H1 (cell line): ENCODE measurements at regions of chr6 and their contacts with region 1.

Region 1: DNA sequence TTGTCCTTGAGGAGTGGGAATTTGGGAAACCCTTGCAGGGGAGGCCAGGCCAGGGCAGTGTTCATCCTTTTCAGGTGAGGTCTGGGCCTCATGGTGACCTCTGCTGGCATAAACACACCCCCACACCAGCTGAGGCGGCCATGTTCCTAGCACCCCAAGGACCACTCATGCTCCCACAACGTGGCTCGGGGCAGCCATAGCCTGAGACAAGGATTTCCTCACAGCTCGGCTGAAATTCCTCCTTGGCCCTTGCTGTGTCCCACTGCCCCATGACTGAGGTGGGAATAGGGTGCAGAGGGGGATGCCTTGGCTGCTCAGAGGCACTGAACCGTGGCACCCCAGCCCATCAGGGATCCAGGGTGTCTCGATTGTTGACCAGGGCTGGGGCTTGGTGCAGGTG is 27.3 kb upstream of the SPDEF start:
- DNase-seq: no peak
- H3K4me3 ChIP-seq: no peak overlapping the region
- H3K27ac ChIP-seq: no peak overlapping the region
- H3K4me1 ChIP-seq: peaks cover 2 to 20% (median 11%) of the 10 kb centered on the region in 4 experiments; a peak in 6 of 7 replicates
- H3K27me3 ChIP-seq: no peaks in the 10 kb centered on the region
- CTCF ChIP-seq: peak; percentile 36 to 68 (median 61); a peak in 3 of 4 replicates
- EP300 ChIP-seq: no peak
- POLR2A ChIP-seq: no peak
- RAD21 ChIP-seq: peak; percentile 45 to 59

Region 2: GRCh38 chr6:34560366-34561226 is 22.9 kb before region 1 on chr6:
- CTCF ChIA-PET with region 1: interaction called, 20 read pairs
- POLR2A ChIA-PET with region 1: no interaction called
- DNase-seq: no peak
- H3K4me3 ChIP-seq: no peak overlapping the region
- H3K27ac ChIP-seq: no peak overlapping the region
- H3K4me1 ChIP-seq: peaks cover 0 to 6% (median 4%) of the 10 kb centered on the region in 4 experiments; a peak in 4 of 7 replicates
- H3K27me3 ChIP-seq: no peaks in the 10 kb centered on the region
- CTCF ChIP-seq: no peak
- EP300 ChIP-seq: no peak
- POLR2A ChIP-seq: no peak
- RAD21 ChIP-seq: peak in 1 of 2 experiments; percentile 21; a peak in 2 of 4 replicates

Region 3: GRCh38 chr6:34565722-34566137 is 17.7 kb before region 1 on chr6:
- CTCF ChIA-PET with region 1: interaction called, 20 read pairs
- POLR2A ChIA-PET with region 1: interaction called, 4 read pairs
- DNase-seq: no peak
- H3K4me3 ChIP-seq: no peak overlapping the region
- H3K27ac ChIP-seq: no peak overlapping the region
- H3K4me1 ChIP-seq: peaks cover 0 to 15% (median 9%) of the 10 kb centered on the region in 4 experiments; a peak in 6 of 7 replicates
- H3K27me3 ChIP-seq: no peaks in the 10 kb centered on the region
- CTCF ChIP-seq: peak in 1 of 3 experiments; percentile 14; a peak in 1 of 4 replicates
- EP300 ChIP-seq: no peak
- POLR2A ChIP-seq: no peak
- RAD21 ChIP-seq: peak; percentile 13 to 19; a peak in 1 of 4 replicates

Region 4: GRCh38 chr6:34595332-34596184 is 12.1 kb after region 1 on chr6:
- CTCF ChIA-PET with region 1: interaction called, 14 read pairs
- POLR2A ChIA-PET with region 1: interaction called, 4 read pairs
- DNase-seq: no peak
- H3K4me3 ChIP-seq: no peak overlapping the region
- H3K27ac ChIP-seq: no peak overlapping the region; the same call in 1 of the 2 replicates
- H3K4me1 ChIP-seq: peaks cover 0 to 5% (median 0%) of the 10 kb centered on the region in 4 experiments; a peak in 2 of 7 replicates
- H3K27me3 ChIP-seq: no peaks in the 10 kb centered on the region
- CTCF ChIP-seq: no peak
- EP300 ChIP-seq: no peak
- POLR2A ChIP-seq: no peak
- RAD21 ChIP-seq: no peak